BJ (cell line): ENCODE measurements at regions of chr16 and their contacts with region 1.

Region 1: GRCh38 chr16:67428146-67428731 is 2.7 kb upstream of the HSD11B2 start:
- DNase-seq: no peak
- H3K4me3 ChIP-seq: no peak overlapping the region
- H3K27me3 ChIP-seq: peaks cover 31% of the 10 kb centered on the region
- CTCF ChIP-seq: peak; percentile 93

Region 2: DNA sequence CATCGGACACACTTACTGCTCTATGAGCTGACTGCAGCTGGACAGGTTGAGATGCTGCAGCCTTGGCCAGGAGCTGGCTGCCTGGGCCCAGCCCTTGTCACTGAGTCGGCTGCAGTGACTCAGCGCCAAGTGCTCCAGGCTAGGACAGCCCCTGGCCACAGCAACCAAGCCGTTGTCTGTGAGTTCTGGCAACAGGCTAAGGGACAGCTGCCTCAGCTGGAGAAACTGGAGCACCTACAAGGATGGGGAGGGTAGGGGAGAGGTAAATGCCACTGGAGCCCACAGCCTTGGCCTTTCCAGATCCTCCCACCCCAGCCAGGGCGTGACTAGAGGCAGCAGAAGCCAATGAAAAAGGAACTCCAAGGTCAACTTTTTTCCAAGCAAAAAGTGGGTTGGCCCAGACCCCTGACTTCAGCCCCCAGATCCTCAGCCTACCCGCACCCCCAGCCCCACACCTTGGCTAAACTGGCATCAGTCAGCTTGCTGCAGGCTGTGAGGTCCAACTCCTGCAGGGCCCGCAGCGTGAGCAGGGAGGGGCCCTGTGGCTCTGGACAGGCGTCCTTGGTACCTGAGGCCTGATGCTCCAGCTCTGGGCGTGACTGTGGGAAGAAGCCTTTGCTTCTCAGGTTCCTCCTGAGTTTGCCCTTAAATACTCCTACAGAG is 220.3 kb before region 1 on chr16:
- CTCF ChIA-PET with region 1: no interaction called
- POLR2A ChIA-PET with region 1: no interaction called
- DNase-seq: peak; percentile 5
- H3K4me3 ChIP-seq: no peak overlapping the region
- H3K27me3 ChIP-seq: no peaks in the 10 kb centered on the region
- CTCF ChIP-seq: no peak

Region 3: DNA sequence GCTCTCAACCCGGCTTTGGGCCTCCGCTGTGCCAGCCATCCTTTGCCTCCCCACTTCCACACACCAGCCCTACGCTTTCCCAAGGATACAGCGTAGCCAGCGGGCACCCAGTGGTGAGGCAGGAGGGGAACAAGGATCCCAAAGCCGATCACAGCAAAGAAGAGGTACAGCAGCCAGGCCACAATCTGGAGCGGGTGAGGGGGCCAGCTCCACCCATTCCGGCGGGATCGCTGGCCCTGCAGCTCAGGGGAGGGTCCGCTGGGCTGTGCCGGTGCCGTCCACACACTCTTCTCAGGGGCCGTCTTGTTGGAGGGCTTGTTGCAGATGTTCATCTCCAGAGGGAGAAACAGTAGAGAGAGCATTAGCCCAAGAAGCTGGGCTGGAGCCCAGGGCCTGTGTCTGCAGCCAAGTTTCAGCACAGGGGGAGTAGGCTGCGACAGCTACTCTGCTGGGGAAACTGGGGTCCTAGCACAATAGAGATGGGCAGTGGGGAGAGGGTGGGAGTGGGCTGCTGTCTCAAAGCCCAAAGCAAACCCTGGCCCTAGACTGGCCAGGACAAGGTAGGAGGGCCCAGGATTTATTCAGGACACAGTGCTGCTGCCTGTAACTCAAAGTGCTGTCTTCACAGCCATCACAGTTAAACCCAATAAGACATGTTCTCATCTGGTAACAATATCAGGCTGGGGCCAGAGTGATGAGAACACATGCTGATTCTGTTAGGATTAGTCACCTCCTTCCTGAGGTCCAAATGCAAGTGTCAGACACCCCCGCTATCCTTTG is 21.9 kb before region 1 on chr16:
- CTCF ChIA-PET with region 1: interaction called, 15 read pairs
- POLR2A ChIA-PET with region 1: no interaction called
- DNase-seq: peak; percentile 78
- H3K4me3 ChIP-seq: no peak overlapping the region
- H3K27me3 ChIP-seq: no peaks in the 10 kb centered on the region
- CTCF ChIP-seq: no peak

Region 4: DNA sequence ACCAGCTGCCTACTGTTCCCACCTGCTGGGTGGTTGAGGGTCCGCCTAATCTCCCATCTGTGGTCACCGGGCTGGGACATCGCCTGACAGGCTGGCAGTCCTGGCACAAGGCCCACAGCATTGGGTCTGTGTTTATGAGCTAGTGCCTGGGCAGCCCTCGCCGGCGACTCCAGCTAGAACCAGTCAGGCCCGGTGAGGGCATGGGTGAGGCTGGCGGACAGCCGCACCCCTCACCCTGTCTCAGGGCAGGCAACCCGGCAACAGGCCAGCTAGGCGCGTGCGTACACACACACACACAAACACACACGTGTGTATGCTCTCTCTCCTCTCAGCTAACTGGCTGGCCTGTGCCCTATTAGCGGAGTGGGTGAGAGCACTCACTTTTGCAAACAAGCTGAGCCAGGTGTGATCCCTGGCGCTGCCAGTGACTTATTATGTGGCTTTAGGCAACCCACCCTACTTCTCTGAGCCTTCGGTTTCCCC is 13.1 kb after region 1 on chr16:
- CTCF ChIA-PET with region 1: interaction called, 47 read pairs
- POLR2A ChIA-PET with region 1: no interaction called
- DNase-seq: no peak
- H3K4me3 ChIP-seq: no peak overlapping the region
- H3K27me3 ChIP-seq: no peaks in the 10 kb centered on the region
- CTCF ChIP-seq: no peak

Region 5: DNA sequence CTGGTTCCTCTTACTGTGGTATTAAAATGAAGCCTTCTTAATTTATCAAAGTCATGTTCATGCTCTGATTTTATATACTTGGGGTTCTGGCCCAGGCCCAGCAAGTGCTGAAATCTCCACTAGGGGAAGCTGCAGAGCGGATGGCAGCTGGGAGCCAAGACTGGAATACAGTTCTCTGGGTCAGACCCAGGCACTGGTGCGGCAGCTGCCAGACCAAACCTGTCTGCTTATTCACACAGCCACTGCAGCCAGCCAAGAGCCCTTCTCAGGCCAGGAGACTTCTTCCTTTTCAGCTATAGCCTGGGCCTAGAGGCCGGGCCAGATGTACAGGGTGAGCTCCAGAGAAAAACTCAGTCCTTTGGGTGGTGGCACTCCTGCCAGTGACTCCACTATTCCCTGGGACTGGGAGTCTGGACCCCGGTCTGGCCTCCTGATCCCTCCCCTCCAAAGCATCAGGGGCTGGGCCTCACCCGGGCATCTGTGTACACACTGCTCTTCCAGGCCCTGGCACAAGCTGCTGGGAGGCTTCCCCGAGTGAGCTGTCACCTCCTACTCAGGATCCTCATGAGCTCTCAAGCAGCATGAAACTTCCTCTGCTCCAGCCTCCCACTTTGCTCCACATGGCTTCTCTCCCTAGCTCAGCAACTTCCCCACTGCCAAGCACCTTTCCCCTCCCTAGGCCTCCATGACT is 28.3 kb after region 1 on chr16:
- CTCF ChIA-PET with region 1: interaction called, 276 read pairs
- POLR2A ChIA-PET with region 1: no interaction called
- DNase-seq: no peak
- H3K4me3 ChIP-seq: no peak overlapping the region
- H3K27me3 ChIP-seq: no peaks in the 10 kb centered on the region
- CTCF ChIP-seq: peak; percentile 64

Region 6: DNA sequence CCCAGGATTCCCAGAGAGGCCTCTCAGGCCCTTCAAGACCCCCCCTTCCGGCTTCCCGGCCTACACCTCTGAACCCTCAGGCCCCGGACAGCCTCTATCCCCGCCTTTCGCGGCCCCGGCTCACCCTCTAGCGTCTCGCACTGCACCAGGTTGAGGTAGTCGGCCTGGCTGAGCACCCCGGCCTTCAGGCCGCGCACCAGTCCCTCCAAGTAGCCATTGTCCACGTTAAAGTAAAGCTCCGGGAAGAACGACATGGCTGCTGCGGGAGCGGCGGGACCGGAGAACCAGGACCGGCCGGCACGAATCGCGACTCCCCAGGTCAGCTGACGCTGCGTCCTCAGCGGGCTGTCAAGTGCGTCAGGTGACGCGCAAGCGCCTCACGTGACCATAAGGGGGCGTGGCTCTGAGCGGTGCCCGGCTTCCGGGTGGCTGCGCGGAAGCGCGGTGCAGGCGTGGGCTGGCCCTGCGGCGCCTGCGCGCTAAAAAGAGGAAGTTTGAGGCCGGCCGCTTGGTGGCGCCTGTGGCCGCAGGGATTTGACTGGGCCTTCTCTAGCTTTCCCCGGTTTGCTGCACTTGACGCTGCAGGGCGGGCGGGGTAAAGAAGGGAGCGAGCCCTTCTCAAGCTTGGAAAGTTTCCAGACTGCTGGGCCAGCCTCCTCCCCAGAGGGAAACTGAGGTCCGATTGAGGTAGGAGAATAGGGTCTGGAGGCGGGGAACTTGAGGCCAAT is 52.8 kb after region 1 on chr16 and contains the start of gene ATP6V0D1:
- CTCF ChIA-PET with region 1: interaction called, 48 read pairs
- POLR2A ChIA-PET with region 1: no interaction called
- DNase-seq: peak; percentile 89
- H3K4me3 ChIP-seq: peak within 1 kb of the TSS; percentile 86
- H3K27me3 ChIP-seq: no peaks in the 10 kb centered on the region
- CTCF ChIP-seq: peak; percentile 87
- polyA plus RNA-seq, gene ATP6V0D1: 111 and 155 TPM in 2 replicates